Activated CD4-positive, alpha-beta T cell treated with anti-CD3 and anti-CD28 coated beads for 36 hours (primary cell): ENCODE measurements at regions of chr17 and their contacts with region 1.

Region 1: DNA sequence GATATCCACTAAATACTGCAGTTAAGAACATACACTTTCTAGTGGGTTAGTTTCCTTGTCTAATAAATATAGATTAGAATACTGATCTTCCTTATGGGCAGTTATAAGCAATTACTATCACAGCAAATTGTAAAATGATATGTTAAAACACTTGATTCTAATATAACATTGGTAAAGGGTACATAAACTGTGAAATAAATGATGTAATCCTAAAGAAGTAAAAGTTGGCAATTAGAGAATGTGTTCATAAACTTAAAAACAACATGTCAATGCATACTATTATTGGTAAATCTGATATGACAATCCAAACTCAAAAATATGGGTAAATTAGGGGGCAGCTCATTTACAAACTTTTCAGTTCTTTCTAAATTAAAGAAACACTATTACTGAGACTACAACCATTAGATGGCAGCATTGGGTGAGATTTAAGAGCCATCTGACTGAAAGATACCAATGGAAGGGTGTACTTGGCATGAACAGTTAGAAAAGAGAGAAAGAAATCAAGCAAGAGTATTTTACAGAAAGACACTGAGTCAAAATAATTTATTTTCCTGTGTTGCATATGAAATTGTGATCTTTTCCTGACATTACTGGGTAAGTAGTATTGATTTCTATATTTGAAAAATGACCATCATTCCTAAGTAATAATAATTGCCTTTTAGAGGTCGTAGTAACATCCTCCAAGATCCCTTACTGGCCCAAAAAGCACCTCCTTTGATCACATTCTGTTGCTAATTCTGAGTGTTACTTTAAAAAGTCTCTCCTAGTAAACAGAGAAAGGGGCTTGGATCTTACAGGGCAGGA is 119.6 kb downstream of the SPAG9 start:
- DNase-seq: no peak
- ATAC-seq: peak; percentile 85
- H3K4me3 Mint-ChIP-seq: no peak overlapping the region
- H3K27ac Mint-ChIP-seq: no peak overlapping the region
- H3K4me1 Mint-ChIP-seq: peaks cover 6% of the 10 kb centered on the region
- H3K27me3 Mint-ChIP-seq: no peaks in the 10 kb centered on the region

Region 2: GRCh38 chr17:51015145-51015558 is 14.1 kb after region 1 on chr17:
- CTCF ChIA-PET with region 1: interaction called, 26 read pairs
- POLR2A ChIA-PET with region 1: no interaction called
- intact Hi-C with region 1: no loop called
- DNase-seq: no peak
- ATAC-seq: no peak
- H3K4me3 Mint-ChIP-seq: no peak overlapping the region
- H3K27ac Mint-ChIP-seq: no peak overlapping the region
- H3K4me1 Mint-ChIP-seq: no peaks in the 10 kb centered on the region
- H3K27me3 Mint-ChIP-seq: no peaks in the 10 kb centered on the region

Region 3: GRCh38 chr17:51046514-51047384 is 45.7 kb after region 1 on chr17:
- CTCF ChIA-PET with region 1: interaction called, 10 read pairs
- POLR2A ChIA-PET with region 1: interaction called, 3 read pairs
- intact Hi-C with region 1: no loop called
- DNase-seq: no peak
- ATAC-seq: no peak
- H3K4me3 Mint-ChIP-seq: no peak overlapping the region
- H3K27ac Mint-ChIP-seq: no peak overlapping the region
- H3K4me1 Mint-ChIP-seq: peaks cover 2% of the 10 kb centered on the region
- H3K27me3 Mint-ChIP-seq: no peaks in the 10 kb centered on the region

Region 4: GRCh38 chr17:51056813-51057510 is 55.9 kb after region 1 on chr17:
- CTCF ChIA-PET with region 1: interaction called, 6 read pairs
- POLR2A ChIA-PET with region 1: no interaction called
- intact Hi-C with region 1: loop called (anchors 1 to 2 kb)
- DNase-seq: peak; percentile 25
- ATAC-seq: peak; percentile 61
- H3K4me3 Mint-ChIP-seq: no peak overlapping the region
- H3K27ac Mint-ChIP-seq: no peak overlapping the region
- H3K4me1 Mint-ChIP-seq: peaks cover 8% of the 10 kb centered on the region
- H3K27me3 Mint-ChIP-seq: no peaks in the 10 kb centered on the region

Region 5: DNA sequence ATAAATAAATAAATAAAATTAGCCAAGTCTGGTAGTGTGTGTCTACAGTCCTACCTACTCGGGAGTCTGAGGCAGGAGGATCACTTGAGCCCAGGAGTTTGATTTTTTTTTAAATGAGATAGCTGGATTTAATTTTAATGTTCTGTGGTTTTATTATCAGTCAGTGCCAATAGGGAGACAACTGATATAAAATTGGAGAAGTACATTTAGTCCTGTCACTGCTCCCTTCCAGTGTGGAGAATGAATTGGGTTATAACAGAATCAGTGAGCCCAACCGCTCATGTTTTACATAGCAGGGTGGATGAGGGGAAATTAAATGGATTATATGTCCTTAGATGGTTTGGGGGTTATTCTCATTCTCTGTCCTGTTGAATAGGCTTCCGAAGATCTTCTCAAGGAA is 158.6 kb after region 1 on chr17:
- CTCF ChIA-PET with region 1: interaction called, 12 read pairs
- POLR2A ChIA-PET with region 1: no interaction called
- intact Hi-C with region 1: no loop called
- DNase-seq: no peak
- ATAC-seq: no peak
- H3K4me3 Mint-ChIP-seq: no peak overlapping the region
- H3K27ac Mint-ChIP-seq: no peak overlapping the region
- H3K4me1 Mint-ChIP-seq: peaks cover 10% of the 10 kb centered on the region
- H3K27me3 Mint-ChIP-seq: no peaks in the 10 kb centered on the region

Region 6: GRCh38 chr17:51166197-51166986 is 165.4 kb after region 1 on chr17 and contains the start of gene NME2:
- CTCF ChIA-PET with region 1: interaction called, 10 read pairs
- POLR2A ChIA-PET with region 1: no interaction called
- intact Hi-C with region 1: loop called (anchors 1 kb)
- DNase-seq: peak; percentile 80
- ATAC-seq: peak; percentile 76
- H3K4me3 Mint-ChIP-seq: peak within 1 kb of the TSS; percentile 79
- H3K27ac Mint-ChIP-seq: peak within 1 kb of the TSS; percentile 95
- H3K4me1 Mint-ChIP-seq: peaks cover 31% of the 10 kb centered on the region
- H3K27me3 Mint-ChIP-seq: no peaks in the 10 kb centered on the region
- total RNA-seq, gene NME2: 703 to 827 TPM